Natural killer cell (primary cell): ENCODE measurements at regions of chr19 and their contacts with region 1.

Region 1: GRCh38 chr19:49097455-49098288 is 12.4 kb downstream of the SNRNP70 start:
- DNase-seq: peak; percentile 67 to 88
- ATAC-seq: peak; percentile 94 to 98 (median 95)
- H3K4me3 ChIP-seq: no peak overlapping the region
- H3K4me3 Mint-ChIP-seq: no peak overlapping the region
- H3K27ac ChIP-seq: no peak overlapping the region
- H3K27ac Mint-ChIP-seq: no peak overlapping the region
- H3K4me1 ChIP-seq: no peaks in the 10 kb centered on the region
- H3K4me1 Mint-ChIP-seq: peaks cover 0 to 16% of the 10 kb centered on the region in 2 donors
- H3K27me3 ChIP-seq: no peaks in the 10 kb centered on the region
- H3K27me3 Mint-ChIP-seq: no peaks in the 10 kb centered on the region
- CTCF ChIP-seq: peak; percentile 96

Region 2: GRCh38 chr19:49148784-49149651 is 51.3 kb after region 1 on chr19:
- intact Hi-C with region 1: loop called (anchors 1 kb)
- DNase-seq: peak; percentile 80 to 84
- ATAC-seq: peak; percentile 75 to 82 (median 79)
- H3K4me3 ChIP-seq: peak overlapping the region; percentile 56
- H3K4me3 Mint-ChIP-seq: peak overlapping the region; percentile 96
- H3K27ac ChIP-seq: no peak overlapping the region
- H3K27ac Mint-ChIP-seq: no peak overlapping the region
- H3K4me1 ChIP-seq: peaks cover 45% of the 10 kb centered on the region
- H3K4me1 Mint-ChIP-seq: peaks cover 27 to 52% of the 10 kb centered on the region in 2 donors
- H3K27me3 ChIP-seq: peaks cover 25% of the 10 kb centered on the region
- H3K27me3 Mint-ChIP-seq: peaks cover 17 to 48% of the 10 kb centered on the region in 2 donors
- CTCF ChIP-seq: no peak

Region 3: GRCh38 chr19:49200238-49200862 is 102.7 kb after region 1 on chr19:
- intact Hi-C with region 1: loop called (anchors 2 kb)
- DNase-seq: peak in 1 of 2 donors; percentile 15
- ATAC-seq: no peak
- H3K4me3 ChIP-seq: no peak overlapping the region
- H3K4me3 Mint-ChIP-seq: no peak overlapping the region
- H3K27ac ChIP-seq: no peak overlapping the region
- H3K27ac Mint-ChIP-seq: no peak overlapping the region
- H3K4me1 ChIP-seq: no peaks in the 10 kb centered on the region
- H3K4me1 Mint-ChIP-seq: no peaks in the 10 kb centered on the region
- H3K27me3 ChIP-seq: no peaks in the 10 kb centered on the region
- H3K27me3 Mint-ChIP-seq: peaks cover 0 to 3% of the 10 kb centered on the region in 2 donors
- CTCF ChIP-seq: no peak

Region 4: GRCh38 chr19:49210108-49210900 is 112.6 kb after region 1 on chr19:
- intact Hi-C with region 1: loop called (anchors 1 kb)
- DNase-seq: peak in 1 of 2 donors; percentile 60
- ATAC-seq: peak in 2 of 3 donors; percentile 71 to 75
- H3K4me3 ChIP-seq: no peak overlapping the region
- H3K4me3 Mint-ChIP-seq: no peak overlapping the region
- H3K27ac ChIP-seq: no peak overlapping the region
- H3K27ac Mint-ChIP-seq: no peak overlapping the region
- H3K4me1 ChIP-seq: peaks cover 10% of the 10 kb centered on the region
- H3K4me1 Mint-ChIP-seq: no peaks in the 10 kb centered on the region
- H3K27me3 ChIP-seq: no peaks in the 10 kb centered on the region
- H3K27me3 Mint-ChIP-seq: peaks cover 0 to 5% of the 10 kb centered on the region in 2 donors
- CTCF ChIP-seq: no peak